ENCODE measurements at regions of chr1 and their contacts with region 1.

Region 1: DNA sequence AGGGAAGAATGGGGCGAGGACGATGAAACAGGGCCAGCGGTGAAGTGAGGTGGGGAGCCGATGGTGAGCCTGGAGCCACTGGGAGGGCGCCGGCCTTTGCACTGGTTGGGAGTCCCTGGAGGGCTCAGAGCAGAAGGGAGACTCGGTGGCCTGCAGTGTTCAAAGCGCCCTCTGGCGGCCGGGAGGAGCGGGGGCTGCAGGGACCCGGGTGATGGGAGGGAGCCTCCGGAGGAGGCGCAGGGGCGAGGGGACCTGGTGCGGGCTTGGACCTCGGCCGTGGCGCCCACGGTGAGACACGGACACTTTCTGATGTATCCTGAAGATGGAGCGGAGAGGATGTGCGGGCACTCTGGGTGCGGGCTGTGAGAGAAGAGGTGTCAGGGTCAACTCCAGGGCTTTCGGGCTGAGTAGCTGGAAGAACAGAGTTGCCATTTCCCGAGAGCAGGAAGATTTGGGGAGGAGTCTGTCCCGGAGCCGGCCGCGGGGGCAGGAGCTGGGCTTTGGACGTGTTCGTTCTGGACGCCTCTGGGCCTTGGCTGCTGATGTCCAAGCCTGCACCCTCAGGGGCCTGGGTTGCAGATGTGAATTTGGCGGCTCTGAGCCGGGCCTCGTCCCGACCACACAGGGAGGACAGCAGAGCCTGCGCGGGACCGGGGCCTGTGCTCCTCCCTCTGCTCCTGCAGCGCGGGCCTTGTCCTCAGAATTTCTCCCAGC is 29.7 kb downstream of the HEYL start:
- DNase-seq: peak; percentile 73
- ATAC-seq: peak; percentile 83
- H3K4me3 Mint-ChIP-seq: no peak overlapping the region
- H3K27ac Mint-ChIP-seq: no peak overlapping the region
- H3K4me1 Mint-ChIP-seq: peaks cover 10% of the 10 kb centered on the region
- H3K27me3 Mint-ChIP-seq: peaks cover 24% of the 10 kb centered on the region

Region 2: GRCh38 chr1:39575191-39576015 is 34.4 kb before region 1 on chr1:
- CTCF ChIA-PET with region 1: interaction called, 12 read pairs
- DNase-seq: peak; percentile 74
- ATAC-seq: peak; percentile 41
- H3K4me3 Mint-ChIP-seq: peak overlapping the region; percentile 82
- H3K27ac Mint-ChIP-seq: peak overlapping the region; percentile 89
- H3K4me1 Mint-ChIP-seq: peaks cover 37% of the 10 kb centered on the region
- H3K27me3 Mint-ChIP-seq: no peaks in the 10 kb centered on the region

Region 3: GRCh38 chr1:39620659-39621165 is 10.9 kb after region 1 on chr1:
- CTCF ChIA-PET with region 1: interaction called, 20 read pairs
- DNase-seq: no peak
- ATAC-seq: no peak
- H3K4me3 Mint-ChIP-seq: no peak overlapping the region
- H3K27ac Mint-ChIP-seq: no peak overlapping the region
- H3K4me1 Mint-ChIP-seq: no peaks in the 10 kb centered on the region
- H3K27me3 Mint-ChIP-seq: peaks cover 15% of the 10 kb centered on the region

Region 4: GRCh38 chr1:39646232-39647081 is 36.7 kb after region 1 on chr1:
- CTCF ChIA-PET with region 1: interaction called, 264 read pairs
- DNase-seq: no peak
- ATAC-seq: no peak
- H3K4me3 Mint-ChIP-seq: no peak overlapping the region
- H3K27ac Mint-ChIP-seq: no peak overlapping the region
- H3K4me1 Mint-ChIP-seq: no peaks in the 10 kb centered on the region
- H3K27me3 Mint-ChIP-seq: peaks cover 10% of the 10 kb centered on the region

Region 5: DNA sequence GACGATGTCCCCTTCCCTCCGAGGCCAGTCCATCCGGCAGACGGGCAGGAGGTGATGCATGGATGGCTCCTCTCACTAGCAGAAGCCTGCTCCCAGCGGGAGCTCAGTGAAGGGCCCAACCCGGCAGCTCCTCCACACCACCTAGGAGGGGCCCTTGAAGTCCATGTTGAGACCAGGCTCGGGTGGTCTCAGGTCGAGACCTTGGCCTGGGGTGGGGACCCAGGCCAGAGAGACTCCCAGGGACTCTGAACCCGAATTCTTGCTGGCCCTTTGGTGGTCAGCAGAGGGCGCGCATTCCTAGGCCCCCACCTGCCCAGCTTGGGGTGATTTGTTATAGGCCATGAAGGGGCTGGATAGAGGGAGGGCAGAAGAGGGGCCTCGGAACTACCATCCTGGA is 62.8 kb after region 1 on chr1:
- CTCF ChIA-PET with region 1: interaction called, 32 read pairs
- DNase-seq: peak; percentile 53
- ATAC-seq: peak; percentile 30
- H3K4me3 Mint-ChIP-seq: no peak overlapping the region
- H3K27ac Mint-ChIP-seq: no peak overlapping the region
- H3K4me1 Mint-ChIP-seq: peaks cover 10% of the 10 kb centered on the region
- H3K27me3 Mint-ChIP-seq: peaks cover 39% of the 10 kb centered on the region

Region 6: GRCh38 chr1:39738622-39739366 is 129.0 kb after region 1 on chr1 and contains the start of gene PPIE:
- CTCF ChIA-PET with region 1: interaction called, 10 read pairs
- DNase-seq: peak; percentile 98
- ATAC-seq: peak; percentile 97
- H3K4me3 Mint-ChIP-seq: peak within 1 kb of the TSS; percentile 98
- H3K27ac Mint-ChIP-seq: peak within 1 kb of the TSS; percentile 95
- H3K4me1 Mint-ChIP-seq: peaks cover 54% of the 10 kb centered on the region
- H3K27me3 Mint-ChIP-seq: peaks cover 11% of the 10 kb centered on the region
- total RNA-seq, gene PPIE: 67.4 to 69.5 TPM